WTC11 (cell line): ENCODE measurements at regions of chr15 and their contacts with region 1.

Region 1: DNA sequence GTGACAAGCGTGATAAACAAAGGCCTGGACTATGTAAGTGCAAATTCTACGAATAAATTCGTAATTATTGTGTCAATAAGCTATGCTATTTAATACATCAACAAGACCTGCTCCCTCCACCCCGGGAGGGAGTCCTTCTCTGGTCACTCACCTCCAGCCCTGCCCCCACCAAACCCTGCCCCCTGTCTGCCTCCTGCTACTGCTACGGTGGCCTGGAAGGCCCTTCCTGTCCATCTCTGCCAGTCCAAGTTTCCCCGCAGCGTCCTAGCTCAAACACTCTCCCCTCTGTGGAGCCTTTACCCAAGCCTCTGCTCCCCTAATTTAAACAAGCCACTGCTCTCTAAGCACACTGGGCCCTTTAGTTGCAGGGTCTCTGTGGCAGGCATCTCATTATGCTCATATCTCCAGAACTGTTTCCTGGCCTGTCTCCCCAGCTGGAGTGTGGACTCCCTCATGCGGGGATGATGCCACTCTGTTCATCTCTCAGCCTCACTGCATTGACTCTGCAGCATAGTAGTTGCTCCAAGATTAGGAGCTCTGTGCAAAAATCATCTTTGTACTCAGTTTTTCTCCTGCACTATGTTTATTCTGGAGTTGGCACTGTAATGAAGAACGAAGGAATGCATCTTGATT is 241.2 kb downstream of the NTRK3 start:
- DNase-seq: no peak
- ATAC-seq: peak; percentile 71
- H3K4me3 Mint-ChIP-seq: no peak overlapping the region
- H3K27ac Mint-ChIP-seq: no peak overlapping the region; the same call in 1 of the 2 replicates
- H3K4me1 Mint-ChIP-seq: peaks cover 25% of the 10 kb centered on the region
- H3K27me3 Mint-ChIP-seq: no peaks in the 10 kb centered on the region
- CTCF ChIP-seq: no peak

Region 2: GRCh38 chr15:88028024-88028423 is 12.7 kb after region 1 on chr15:
- CTCF ChIA-PET with region 1: interaction called, 17 read pairs
- POLR2A ChIA-PET with region 1: no interaction called
- DNase-seq: peak; percentile 39
- ATAC-seq: peak; percentile 57
- H3K4me3 Mint-ChIP-seq: no peak overlapping the region
- H3K27ac Mint-ChIP-seq: no peak overlapping the region
- H3K4me1 Mint-ChIP-seq: peaks cover 22% of the 10 kb centered on the region
- H3K27me3 Mint-ChIP-seq: no peaks in the 10 kb centered on the region
- CTCF ChIP-seq: peak; percentile 34; the same call in 1 of the 2 replicates